Dorsolateral prefrontal cortex (tissue), 120 donors: ENCODE measurements at regions of chr10 and their contacts with region 1.

Region 1: DNA sequence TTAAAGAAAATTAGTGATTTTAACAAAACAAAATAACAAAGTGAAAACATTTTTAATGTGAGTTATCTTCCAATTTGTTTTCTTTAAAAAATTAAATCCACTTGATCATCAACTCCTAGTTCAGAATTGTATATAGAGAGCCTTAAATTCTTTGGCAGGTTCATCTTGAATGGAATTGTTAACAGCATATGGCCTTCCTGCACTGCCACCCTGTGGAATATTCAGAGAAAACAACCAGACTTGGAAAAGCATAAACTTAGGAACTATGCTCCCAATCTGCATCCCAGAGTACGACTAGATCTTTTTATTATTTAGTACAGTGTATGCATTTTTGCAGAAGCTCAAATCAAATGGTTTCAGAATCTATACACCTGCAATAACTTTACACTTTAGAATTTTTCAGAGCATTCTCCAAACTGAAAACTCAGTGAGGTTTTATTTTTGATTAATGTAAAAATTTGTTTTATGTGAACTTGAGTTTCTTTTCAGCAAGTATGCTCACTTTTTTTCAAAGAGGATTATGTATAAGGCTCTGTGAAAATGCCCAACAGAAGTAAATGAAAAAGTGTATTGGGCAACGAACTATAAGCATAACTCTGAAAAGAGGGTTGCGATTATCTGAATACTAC is 44.9 kb upstream of the ANK3 start:
- DNase-seq: peak in 3 of 10 donors; percentile 55 to 67 (median 66)
- H3K4me3 ChIP-seq: no peak overlapping the region
- H3K27ac ChIP-seq: peak overlapping the region in 22 of 59 donors; percentile 2 to 72 (median 38)
- H3K27me3 ChIP-seq: no peaks in the 10 kb centered on the region
- CTCF ChIP-seq: peak; percentile 60 to 95 (median 85)

Region 2: GRCh38 chr10:60099998-60100747 is 334.4 kb before region 1 on chr10:
- intact Hi-C with region 1: loop called (anchors 2 to 5 kb)
- DNase-seq: peak in 1 of 10 donors; percentile 33
- H3K4me3 ChIP-seq: no peak overlapping the region
- H3K27ac ChIP-seq: peak overlapping the region in 25 of 59 donors; percentile 0 to 78 (median 29)
- H3K27me3 ChIP-seq: no peaks in the 10 kb centered on the region
- CTCF ChIP-seq: peak; percentile 57 to 92 (median 76)

Region 3: GRCh38 chr10:60208676-60209269 is 225.8 kb before region 1 on chr10:
- intact Hi-C with region 1: loop called (anchors 5 kb)
- DNase-seq: no peak
- H3K4me3 ChIP-seq: no peak overlapping the region
- H3K27ac ChIP-seq: peak overlapping the region in 29 of 59 donors; percentile 7 to 73 (median 34)
- H3K27me3 ChIP-seq: no peaks in the 10 kb centered on the region
- CTCF ChIP-seq: peak; percentile 26 to 88 (median 74)

Region 4: DNA sequence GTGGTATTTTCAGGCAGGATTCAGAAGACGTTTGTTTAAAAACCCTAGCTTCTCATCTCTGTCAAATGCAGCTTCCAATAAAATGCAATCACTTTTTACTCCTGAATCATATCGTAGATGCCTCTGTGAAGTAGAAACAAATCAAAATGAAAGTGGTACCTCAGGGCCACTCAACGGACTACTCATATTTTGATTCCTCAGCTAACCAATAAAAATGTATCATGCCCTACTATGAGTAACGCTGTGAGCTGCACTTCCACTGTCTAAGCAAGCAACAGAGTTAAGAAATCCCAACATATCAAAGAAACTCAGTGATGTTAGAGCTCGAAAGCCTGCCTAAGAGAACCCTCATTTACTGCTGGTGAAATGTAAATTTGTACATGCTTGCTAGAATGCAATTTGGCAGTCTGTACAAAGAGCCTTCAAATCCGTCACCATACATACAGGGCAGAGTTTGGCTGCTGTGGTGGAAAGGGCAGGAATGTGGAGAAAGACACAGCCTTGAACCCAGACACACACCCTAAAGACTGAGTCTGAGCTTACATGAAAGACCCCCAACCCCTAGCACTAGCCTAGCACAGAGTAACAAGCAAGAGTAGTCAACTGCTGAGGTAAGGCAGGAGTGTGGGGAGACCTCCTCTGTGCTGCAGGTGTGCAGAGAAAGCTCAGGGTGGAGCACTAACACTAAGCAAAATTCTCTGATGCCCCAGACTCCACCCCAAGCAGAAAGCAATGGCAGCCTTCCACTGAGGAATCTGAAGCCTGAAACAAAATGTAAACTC is 196.4 kb before region 1 on chr10:
- intact Hi-C with region 1: no loop called
- DNase-seq: peak in 1 of 10 donors; percentile 33
- H3K4me3 ChIP-seq: peak overlapping the region in 15 of 59 donors; percentile 2 to 41 (median 12)
- H3K27ac ChIP-seq: peak overlapping the region in 51 of 59 donors; percentile 4 to 71 (median 51)
- H3K27me3 ChIP-seq: no peaks in the 10 kb centered on the region
- CTCF ChIP-seq: peak in 9 of 56 donors; percentile 12 to 30 (median 16)

Region 5: GRCh38 chr10:60291344-60291930 is 143.1 kb before region 1 on chr10:
- intact Hi-C with region 1: no loop called
- DNase-seq: no peak
- H3K4me3 ChIP-seq: no peak overlapping the region
- H3K27ac ChIP-seq: peak overlapping the region in 10 of 59 donors; percentile 1 to 55 (median 24)
- H3K27me3 ChIP-seq: no peaks in the 10 kb centered on the region
- CTCF ChIP-seq: no peak

Region 6: DNA sequence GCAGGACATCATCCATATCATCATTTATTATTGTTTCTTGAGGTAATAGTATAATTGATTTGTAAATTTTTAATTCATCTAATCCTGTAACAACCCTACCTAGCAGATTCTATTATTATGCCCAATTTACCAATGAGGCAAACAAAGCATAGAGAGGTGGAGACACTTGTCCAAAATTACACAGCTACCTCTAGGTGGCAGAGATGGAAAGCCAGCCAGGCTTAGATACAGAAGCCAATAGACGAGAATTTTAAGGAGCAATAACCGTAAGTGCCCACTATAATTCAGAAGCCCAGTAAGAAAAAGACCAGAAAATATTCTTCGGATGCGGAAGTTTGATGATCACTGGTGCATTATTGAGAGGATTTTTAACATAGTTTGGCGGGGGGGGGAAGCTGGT is 98.8 kb before region 1 on chr10:
- intact Hi-C with region 1: loop called (anchors 5 to 10 kb)
- DNase-seq: peak in 2 of 10 donors; percentile 35 to 42
- H3K4me3 ChIP-seq: no peak overlapping the region
- H3K27ac ChIP-seq: peak overlapping the region in 46 of 59 donors; percentile 2 to 98 (median 56)
- H3K27me3 ChIP-seq: no peaks in the 10 kb centered on the region
- CTCF ChIP-seq: peak in 54 of 56 donors; percentile 23 to 77 (median 54)

Region 7: GRCh38 chr10:60367431-60367830 is 67.1 kb before region 1 on chr10:
- intact Hi-C with region 1: no loop called
- DNase-seq: no peak
- H3K4me3 ChIP-seq: peak overlapping the region in 51 of 59 donors; percentile 1 to 57 (median 29)
- H3K27ac ChIP-seq: peak overlapping the region; percentile 23 to 95 (median 82)
- H3K27me3 ChIP-seq: no peaks in the 10 kb centered on the region
- CTCF ChIP-seq: no peak

Region 8: GRCh38 chr10:60384708-60385398 is 49.7 kb before region 1 on chr10:
- intact Hi-C with region 1: loop called (anchors 5 to 10 kb)
- DNase-seq: peak in 5 of 10 donors; percentile 45 to 72 (median 61)
- H3K4me3 ChIP-seq: peak overlapping the region in 42 of 59 donors; percentile 1 to 83 (median 32)
- H3K27ac ChIP-seq: peak overlapping the region in 54 of 59 donors; percentile 5 to 97 (median 72)
- H3K27me3 ChIP-seq: no peaks in the 10 kb centered on the region
- CTCF ChIP-seq: no peak

Region 9: DNA sequence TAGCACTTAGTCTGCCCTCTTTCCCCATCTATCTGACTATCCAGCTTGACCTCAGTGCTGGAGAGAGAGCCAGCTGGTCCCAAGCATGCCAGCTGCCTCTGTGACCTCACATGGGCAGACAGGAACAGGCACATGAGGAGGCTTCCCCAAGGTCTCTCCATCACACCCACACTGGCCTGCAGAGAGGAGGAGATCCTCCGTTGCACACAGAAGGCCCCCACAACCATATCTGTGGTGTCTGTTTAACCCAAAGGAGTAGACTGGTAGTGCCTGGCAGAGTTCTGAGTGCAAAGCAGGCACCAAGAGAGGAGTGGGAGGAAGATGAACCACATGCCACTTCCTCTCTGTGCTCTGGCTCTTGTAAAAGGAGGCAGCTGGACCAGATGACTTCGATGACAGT is 40.1 kb before region 1 on chr10:
- intact Hi-C with region 1: loop called (anchors 5 to 10 kb)
- DNase-seq: peak in 6 of 10 donors; percentile 38 to 62 (median 54)
- H3K4me3 ChIP-seq: no peak overlapping the region
- H3K27ac ChIP-seq: peak overlapping the region in 58 of 59 donors; percentile 4 to 95 (median 66)
- H3K27me3 ChIP-seq: no peaks in the 10 kb centered on the region
- CTCF ChIP-seq: no peak